Activated CD8-positive, alpha-beta T cell treated with anti-CD3 and anti-CD28 coated beads, Interleukin-2, amount 10 ng/mL, durations not matched to agents 7 days and 5 days (primary cell): ENCODE measurements at regions of chr1 and their contacts with region 1.

Region 1: DNA sequence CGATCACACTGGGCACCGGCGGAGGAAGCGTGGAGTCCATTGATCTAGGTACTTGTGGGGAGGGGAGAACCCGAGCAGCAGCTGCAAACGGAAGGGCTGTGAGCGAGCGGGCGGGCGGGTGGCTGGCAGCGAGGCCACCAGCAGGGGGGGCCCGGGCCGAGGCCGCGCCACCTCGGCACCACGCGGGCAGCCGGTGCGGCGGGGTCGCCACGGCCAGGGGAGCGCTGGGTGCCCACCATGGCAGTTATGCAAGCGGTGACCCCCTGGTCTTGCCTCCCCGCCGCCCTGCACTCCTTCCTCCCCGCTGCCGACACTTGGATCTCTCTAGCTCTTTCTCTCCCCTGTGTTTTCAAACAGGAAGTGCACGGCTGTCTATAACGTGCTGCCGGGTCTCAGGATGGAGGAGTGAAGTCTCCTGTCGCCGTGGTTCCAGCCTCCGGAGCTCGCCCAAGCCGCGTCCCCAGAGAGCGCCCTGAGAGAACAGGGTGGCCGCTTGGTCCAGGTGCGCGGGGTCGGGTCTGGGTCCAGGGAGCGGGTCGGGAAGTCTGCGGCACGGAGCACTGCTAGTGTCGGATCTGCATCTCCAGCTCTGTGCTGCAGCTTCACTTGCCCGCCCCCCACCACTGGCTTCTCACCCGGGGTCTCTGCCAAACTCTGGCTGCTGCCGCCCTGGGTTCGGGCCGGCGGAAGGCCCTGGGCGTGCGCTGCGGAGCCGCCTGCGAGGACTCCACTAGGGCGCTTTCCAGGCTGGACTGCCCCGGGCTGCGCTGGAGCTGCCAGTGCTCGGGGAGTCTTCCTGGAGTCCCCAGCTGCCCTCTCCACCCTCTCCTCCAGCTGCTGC is 22.7 kb downstream of the LRRC8D start:
- DNase-seq: peak; percentile 87
- ATAC-seq: peak; percentile 87
- H3K4me3 Mint-ChIP-seq: peak overlapping the region; percentile 91
- H3K27ac Mint-ChIP-seq: peak overlapping the region; percentile 93
- H3K4me1 Mint-ChIP-seq: peaks cover 58% of the 10 kb centered on the region
- H3K27me3 Mint-ChIP-seq: no peaks in the 10 kb centered on the region

Region 2: DNA sequence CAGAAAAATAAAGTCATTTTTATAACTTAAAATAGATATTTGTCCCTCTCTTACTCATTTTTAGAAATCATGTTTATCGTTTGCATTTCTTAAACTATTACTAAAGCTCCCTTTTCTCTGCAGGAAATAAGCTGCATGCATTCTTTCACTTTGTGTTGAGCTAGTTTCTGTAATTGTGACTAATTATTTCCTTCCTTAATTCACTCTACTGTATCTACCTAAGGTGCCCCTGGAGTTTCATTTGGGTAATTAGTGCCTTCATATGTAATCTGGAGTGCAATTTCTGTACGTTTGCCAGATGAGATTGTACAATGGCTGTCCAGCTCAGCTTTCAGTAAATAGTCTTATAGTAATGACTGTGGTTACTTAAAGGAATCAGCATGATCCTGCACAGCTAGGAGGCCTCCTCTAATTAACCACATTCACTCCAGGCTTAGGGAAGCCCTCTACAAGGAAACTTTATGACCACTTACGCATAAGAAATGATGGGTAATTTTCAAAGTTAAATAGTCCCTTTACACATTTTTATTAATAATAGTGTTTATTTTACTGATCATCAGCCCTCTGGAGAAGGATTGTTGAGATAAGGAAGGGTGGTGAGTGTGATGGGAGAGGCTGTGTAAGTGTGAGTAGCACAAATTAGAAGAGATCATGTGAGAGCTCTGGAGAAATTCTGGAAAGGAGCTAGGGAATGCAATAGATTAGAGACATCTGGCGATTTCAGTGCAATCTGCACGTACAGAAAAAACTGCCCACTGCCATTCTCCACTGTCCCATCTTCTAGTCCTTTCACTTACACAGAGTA is 123.8 kb before region 1 on chr1:
- CTCF ChIA-PET with region 1: no interaction called
- POLR2A ChIA-PET with region 1: no interaction called
- DNase-seq: no peak
- ATAC-seq: peak; percentile 82
- H3K4me3 Mint-ChIP-seq: peak overlapping the region; percentile 61
- H3K27ac Mint-ChIP-seq: peak overlapping the region; percentile 97
- H3K4me1 Mint-ChIP-seq: peaks cover 83% of the 10 kb centered on the region
- H3K27me3 Mint-ChIP-seq: no peaks in the 10 kb centered on the region

Region 3: DNA sequence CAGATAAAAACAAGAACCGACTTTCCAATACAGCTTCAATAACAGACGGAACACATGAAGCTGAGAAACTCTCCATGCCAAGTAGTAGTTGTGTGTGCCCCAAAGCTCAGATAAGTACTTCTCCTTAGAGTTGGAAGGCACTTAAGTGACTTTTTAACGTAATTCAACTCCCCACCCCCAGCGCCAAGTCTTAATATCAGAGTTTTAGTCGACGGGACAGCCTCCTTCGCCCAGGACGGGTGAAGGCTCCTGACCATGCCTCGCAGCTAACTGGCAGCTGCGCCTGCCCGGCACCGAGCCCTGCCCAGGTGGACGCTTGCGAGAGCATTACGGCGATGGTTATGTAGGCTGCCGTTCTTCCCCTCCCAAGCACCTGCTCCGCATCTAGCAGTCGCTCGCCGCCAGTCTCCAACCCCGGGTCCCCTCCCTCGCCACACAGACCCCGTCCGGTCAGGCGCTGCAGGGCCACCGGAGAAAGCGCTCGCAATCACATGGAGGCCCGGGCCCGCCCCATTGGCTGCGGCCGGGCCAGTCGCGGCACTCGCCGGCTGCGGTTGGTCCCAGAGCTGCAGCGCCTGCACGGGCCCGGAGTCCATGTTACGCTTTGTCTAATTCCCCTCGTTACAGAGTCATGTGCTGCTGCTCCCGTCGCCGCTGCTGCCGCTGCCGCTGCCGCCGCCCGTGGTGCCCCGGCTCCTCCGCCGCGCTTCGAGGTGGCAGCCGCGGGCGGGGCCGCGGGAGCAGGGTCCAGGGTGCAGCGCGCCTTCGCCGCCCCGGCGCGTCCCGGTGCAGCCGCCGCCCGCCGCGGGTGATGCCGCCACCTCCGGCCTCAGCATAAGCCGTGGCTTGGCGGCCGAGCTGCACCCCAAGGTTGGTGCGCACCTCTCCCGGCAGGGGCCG is 22.8 kb before region 1 on chr1 and contains the start of gene LRRC8D:
- CTCF ChIA-PET with region 1: interaction called, 42 read pairs
- POLR2A ChIA-PET with region 1: interaction called, 23 read pairs
- DNase-seq: peak; percentile 68
- ATAC-seq: peak; percentile 78
- H3K4me3 Mint-ChIP-seq: peak within 1 kb of the TSS; percentile 78
- H3K27ac Mint-ChIP-seq: peak within 1 kb of the TSS; percentile 50
- H3K4me1 Mint-ChIP-seq: peaks cover 32% of the 10 kb centered on the region
- H3K27me3 Mint-ChIP-seq: no peaks in the 10 kb centered on the region
- total RNA-seq, gene LRRC8D: 23.9 to 25.7 TPM

Region 4: GRCh38 chr1:89855413-89856123 is 12.1 kb after region 1 on chr1:
- CTCF ChIA-PET with region 1: interaction called, 26 read pairs
- POLR2A ChIA-PET with region 1: interaction called, 10 read pairs
- DNase-seq: no peak
- ATAC-seq: peak; percentile 84
- H3K4me3 Mint-ChIP-seq: peak overlapping the region; percentile 44
- H3K27ac Mint-ChIP-seq: peak overlapping the region; percentile 71
- H3K4me1 Mint-ChIP-seq: peaks cover 5% of the 10 kb centered on the region
- H3K27me3 Mint-ChIP-seq: no peaks in the 10 kb centered on the region

Region 5: GRCh38 chr1:89890085-89890752 is 46.7 kb after region 1 on chr1:
- CTCF ChIA-PET with region 1: no interaction called
- POLR2A ChIA-PET with region 1: no interaction called
- DNase-seq: no peak
- ATAC-seq: no peak
- H3K4me3 Mint-ChIP-seq: no peak overlapping the region
- H3K27ac Mint-ChIP-seq: no peak overlapping the region
- H3K4me1 Mint-ChIP-seq: peaks cover 5% of the 10 kb centered on the region
- H3K27me3 Mint-ChIP-seq: no peaks in the 10 kb centered on the region

Region 6: GRCh38 chr1:89953072-89953626 is 109.6 kb after region 1 on chr1:
- CTCF ChIA-PET with region 1: interaction called, 10 read pairs
- POLR2A ChIA-PET with region 1: interaction called, 3 read pairs
- DNase-seq: peak; percentile 33
- ATAC-seq: peak; percentile 46
- H3K4me3 Mint-ChIP-seq: no peak overlapping the region
- H3K27ac Mint-ChIP-seq: peak overlapping the region; percentile 31
- H3K4me1 Mint-ChIP-seq: peaks cover 37% of the 10 kb centered on the region
- H3K27me3 Mint-ChIP-seq: no peaks in the 10 kb centered on the region